Activated CD4-positive, alpha-beta T cell treated with anti-CD3 and anti-CD28 coated beads for 36 hours (primary cell): ENCODE measurements at regions of chr11 and their contacts with region 1.

Region 1: GRCh38 chr11:128757235-128757711 is 63.4 kb downstream of the FLI1 start:
- DNase-seq: peak; percentile 83
- ATAC-seq: peak; percentile 78
- H3K4me3 Mint-ChIP-seq: peak overlapping the region; percentile 32
- H3K27ac Mint-ChIP-seq: peak overlapping the region; percentile 95
- H3K4me1 Mint-ChIP-seq: peaks cover 79% of the 10 kb centered on the region
- H3K27me3 Mint-ChIP-seq: no peaks in the 10 kb centered on the region

Region 2: GRCh38 chr11:128172046-128172878 is 585.0 kb before region 1 on chr11:
- CTCF ChIA-PET with region 1: interaction called, 8 read pairs
- POLR2A ChIA-PET with region 1: no interaction called
- intact Hi-C with region 1: loop called (anchors 1 to 5 kb)
- DNase-seq: peak; percentile 94
- ATAC-seq: peak; percentile 84
- H3K4me3 Mint-ChIP-seq: no peak overlapping the region
- H3K27ac Mint-ChIP-seq: no peak overlapping the region
- H3K4me1 Mint-ChIP-seq: peaks cover 22% of the 10 kb centered on the region
- H3K27me3 Mint-ChIP-seq: peaks cover 5% of the 10 kb centered on the region

Region 3: GRCh38 chr11:128653801-128654231 is 103.5 kb before region 1 on chr11:
- CTCF ChIA-PET with region 1: interaction called, 5 read pairs
- POLR2A ChIA-PET with region 1: no interaction called
- intact Hi-C with region 1: loop called in 1 of 2 experiments (anchors 5 kb)
- DNase-seq: peak; percentile 14
- ATAC-seq: no peak
- H3K4me3 Mint-ChIP-seq: no peak overlapping the region
- H3K27ac Mint-ChIP-seq: no peak overlapping the region
- H3K4me1 Mint-ChIP-seq: peaks cover 16% of the 10 kb centered on the region
- H3K27me3 Mint-ChIP-seq: peaks cover 10% of the 10 kb centered on the region

Region 4: GRCh38 chr11:128714881-128715280 is 42.4 kb before region 1 on chr11:
- CTCF ChIA-PET with region 1: interaction called, 15 read pairs
- POLR2A ChIA-PET with region 1: no interaction called
- intact Hi-C with region 1: loop called (anchors 1 to 5 kb)
- DNase-seq: peak; percentile 45
- ATAC-seq: no peak
- H3K4me3 Mint-ChIP-seq: no peak overlapping the region
- H3K27ac Mint-ChIP-seq: peak overlapping the region; percentile 73
- H3K4me1 Mint-ChIP-seq: peaks cover 97% of the 10 kb centered on the region
- H3K27me3 Mint-ChIP-seq: no peaks in the 10 kb centered on the region

Region 5: GRCh38 chr11:128725630-128726319 is 31.5 kb before region 1 on chr11:
- CTCF ChIA-PET with region 1: interaction called, 13 read pairs
- POLR2A ChIA-PET with region 1: interaction called, 3 read pairs
- intact Hi-C with region 1: loop called in 1 of 2 experiments (anchors 2 kb)
- DNase-seq: peak; percentile 65
- ATAC-seq: peak; percentile 53
- H3K4me3 Mint-ChIP-seq: peak overlapping the region; percentile 66
- H3K27ac Mint-ChIP-seq: peak overlapping the region; percentile 87
- H3K4me1 Mint-ChIP-seq: peaks cover 98% of the 10 kb centered on the region
- H3K27me3 Mint-ChIP-seq: no peaks in the 10 kb centered on the region

Region 6: DNA sequence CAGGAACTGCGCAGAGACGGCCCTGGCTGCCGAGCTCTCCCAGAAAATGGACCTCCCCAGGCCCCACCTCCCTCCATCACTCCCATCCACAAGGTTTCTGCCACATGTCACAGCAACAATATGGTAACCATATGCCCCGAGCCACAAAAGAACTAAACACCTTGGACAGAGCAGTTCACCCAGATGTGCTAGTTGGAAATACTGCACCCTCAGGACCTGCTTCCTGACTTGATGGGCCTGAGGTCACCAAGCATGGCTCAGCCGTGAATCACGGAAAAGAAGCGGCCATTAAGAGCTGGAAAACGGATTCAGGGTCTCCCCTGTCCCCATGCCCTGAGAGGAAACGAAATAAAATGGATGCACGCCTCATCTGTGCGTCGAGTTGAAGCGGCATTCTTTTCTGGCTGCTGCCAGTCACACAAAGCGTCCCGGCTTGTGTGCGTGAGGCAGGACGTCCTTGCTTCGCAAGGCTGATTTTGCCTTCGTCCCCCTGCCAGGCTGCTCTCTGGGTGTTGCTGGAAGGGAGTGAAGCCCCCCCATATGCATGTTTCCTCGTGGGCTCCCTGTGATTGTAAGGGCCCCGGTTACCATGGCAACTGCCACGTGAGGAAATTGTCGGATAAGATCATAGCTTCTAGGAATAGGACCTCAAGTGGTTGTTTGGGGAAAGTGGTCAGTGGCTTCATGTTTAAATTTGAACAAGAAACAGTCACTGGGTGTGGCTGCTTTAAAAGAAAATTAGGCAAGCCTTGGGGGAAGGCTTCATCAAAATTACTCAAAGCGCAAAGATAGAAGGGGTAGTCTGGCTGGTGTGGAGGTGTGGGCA is 11.7 kb before region 1 on chr11:
- CTCF ChIA-PET with region 1: interaction called, 13 read pairs
- POLR2A ChIA-PET with region 1: no interaction called
- intact Hi-C with region 1: no loop called
- DNase-seq: no peak
- ATAC-seq: no peak
- H3K4me3 Mint-ChIP-seq: no peak overlapping the region
- H3K27ac Mint-ChIP-seq: no peak overlapping the region
- H3K4me1 Mint-ChIP-seq: peaks cover 65% of the 10 kb centered on the region
- H3K27me3 Mint-ChIP-seq: no peaks in the 10 kb centered on the region

Region 7: DNA sequence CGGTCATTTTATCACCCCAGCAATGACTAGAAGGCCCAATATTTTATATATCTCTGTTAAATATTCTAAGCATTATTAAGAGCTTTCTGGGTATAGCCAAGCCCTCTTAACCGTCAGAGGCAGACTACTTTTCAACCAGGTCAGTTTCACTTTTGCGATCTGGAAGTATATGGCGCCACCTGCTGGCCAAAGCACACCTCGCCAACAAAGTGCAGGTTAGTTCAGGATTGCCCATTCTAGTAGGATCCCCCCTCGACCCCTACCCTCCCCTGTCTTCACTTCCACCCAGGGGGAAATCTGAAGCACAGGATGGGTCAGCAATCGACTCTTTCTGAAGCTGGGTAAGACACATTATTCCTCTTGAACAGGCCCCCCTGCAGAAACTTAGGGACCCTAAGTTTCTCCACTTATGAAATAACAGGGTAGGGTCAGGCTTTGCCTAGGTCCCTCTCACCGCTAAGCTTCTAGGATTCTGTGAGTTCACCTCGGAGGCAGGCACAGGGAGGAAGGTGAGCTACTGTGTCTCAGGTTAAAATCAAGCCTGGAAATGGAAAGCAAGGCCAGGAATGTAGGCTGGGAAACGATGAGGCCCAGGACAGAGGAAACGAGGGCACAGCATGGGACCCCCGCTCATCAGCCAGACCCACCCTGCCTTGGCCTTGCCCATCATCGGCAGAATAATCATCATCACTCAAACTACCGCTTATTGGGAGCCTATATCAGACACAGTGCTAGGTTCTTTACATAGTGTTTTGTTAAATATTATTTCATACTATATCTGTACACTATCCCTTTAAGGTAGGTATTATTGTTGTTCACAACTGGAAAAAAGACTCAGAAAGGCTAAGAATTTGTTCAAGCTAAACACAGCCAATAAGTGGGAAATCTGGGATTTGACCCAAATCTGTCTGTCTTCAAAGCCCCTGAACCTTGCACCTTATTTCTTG is 74.2 kb after region 1 on chr11:
- CTCF ChIA-PET with region 1: interaction called, 4 read pairs
- POLR2A ChIA-PET with region 1: no interaction called
- intact Hi-C with region 1: loop called in 1 of 2 experiments (anchors 1 kb)
- DNase-seq: peak; percentile 93
- ATAC-seq: peak; percentile 81
- H3K4me3 Mint-ChIP-seq: peak overlapping the region; percentile 57
- H3K27ac Mint-ChIP-seq: peak overlapping the region; percentile 93
- H3K4me1 Mint-ChIP-seq: peaks cover 21% of the 10 kb centered on the region
- H3K27me3 Mint-ChIP-seq: no peaks in the 10 kb centered on the region